OCI-LY7 (cell line): ENCODE measurements at regions of chr16 and their contacts with region 1.

Region 1: DNA sequence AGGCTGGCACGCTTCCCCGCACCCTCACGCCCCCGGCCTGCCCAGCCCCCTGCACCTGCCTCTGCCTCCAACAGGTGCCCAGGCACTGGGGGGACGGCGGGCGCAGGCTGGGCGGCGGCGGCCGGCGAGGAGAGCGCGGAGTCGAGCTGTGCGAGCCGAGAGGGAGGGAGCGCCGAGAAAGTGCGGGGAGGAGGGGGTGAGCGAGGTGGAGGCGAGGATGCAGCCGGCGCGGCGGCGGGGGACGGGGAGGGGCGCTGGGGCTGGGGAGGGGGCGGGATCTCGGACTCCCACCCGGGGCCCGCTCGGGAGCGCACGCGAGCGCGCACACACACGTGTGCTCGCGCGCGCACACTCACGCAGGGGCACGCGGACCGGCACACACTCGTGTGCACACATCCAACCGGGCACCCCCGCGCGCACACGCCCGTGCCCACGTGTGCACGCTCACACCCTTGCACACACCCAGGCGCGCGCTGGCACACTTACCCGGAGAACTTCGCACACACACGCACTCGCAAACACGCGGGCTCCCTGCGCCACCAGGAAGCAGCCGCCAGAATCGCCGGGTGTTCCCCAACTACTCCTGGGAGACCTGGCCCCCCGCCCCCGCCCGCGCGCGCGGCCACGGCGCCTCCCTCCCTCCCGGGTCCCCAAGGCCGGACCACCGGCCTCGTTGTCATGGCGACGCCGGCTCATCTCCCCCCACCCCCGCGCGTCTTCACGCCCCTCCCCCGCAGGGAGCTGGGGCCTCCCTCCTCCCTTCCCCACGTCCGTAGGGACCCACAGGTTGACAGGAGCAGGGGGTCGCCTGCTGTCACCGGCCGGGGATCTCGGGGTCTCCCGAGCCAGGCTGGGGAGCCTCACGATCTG is at the start of gene DOC2A:
- DNase-seq: no peak
- H3K4me3 ChIP-seq: peak within 1 kb of the TSS; percentile 36
- H3K27ac ChIP-seq: no peak within 1 kb of the TSS
- H3K4me1 ChIP-seq: peaks cover 2% of the 10 kb centered on the region
- CTCF ChIP-seq: no peak
- total RNA-seq, gene DOC2A: not detected in 2 replicates

Region 2: DNA sequence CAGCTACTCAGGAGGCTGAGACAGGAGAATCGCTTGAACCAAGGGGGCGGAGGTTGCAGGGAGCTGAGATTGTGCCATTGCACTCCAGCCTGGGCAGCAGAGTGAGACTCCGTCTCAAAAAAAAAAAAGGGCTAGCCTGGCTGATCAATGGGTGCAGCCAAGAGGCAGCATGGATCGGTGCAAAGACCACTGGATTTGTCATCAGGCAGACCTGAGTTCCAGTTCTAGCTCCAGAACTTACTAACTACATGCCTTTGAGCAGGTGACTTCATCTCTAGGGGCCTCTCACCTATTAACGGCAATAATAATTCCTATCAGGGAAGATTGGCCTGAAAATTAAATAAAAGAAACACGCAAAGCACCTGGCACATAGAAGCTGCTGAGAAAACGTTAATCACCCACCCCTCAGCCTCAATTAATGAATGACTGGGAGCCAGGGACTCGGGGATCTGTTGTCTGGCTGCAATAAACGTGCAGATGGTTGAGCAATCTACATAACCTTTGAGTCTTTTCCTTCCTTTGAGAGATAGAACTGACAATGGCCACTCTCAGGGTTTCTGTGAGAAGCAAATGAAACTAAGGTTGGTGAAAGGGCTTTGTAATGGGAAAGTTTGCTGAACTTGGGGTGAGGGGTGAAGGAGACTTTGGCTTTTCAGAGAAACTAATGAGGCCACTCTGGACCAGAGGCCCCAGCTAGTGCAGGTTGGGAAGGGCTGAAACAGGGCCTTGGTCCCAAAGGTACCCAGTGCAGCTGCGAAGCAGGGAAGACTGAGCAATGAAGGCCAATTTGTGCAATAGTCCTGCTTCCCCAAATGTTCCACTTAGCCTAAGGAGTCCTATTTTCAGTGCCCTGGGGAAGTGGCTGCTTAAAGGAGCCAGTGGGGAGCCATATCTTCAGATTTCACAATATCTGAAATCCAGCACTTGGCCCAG is 119.3 kb before region 1 on chr16:
- CTCF ChIA-PET with region 1: no interaction called
- POLR2A ChIA-PET with region 1: no interaction called
- intact Hi-C with region 1: no loop called
- DNase-seq: no peak
- H3K4me3 ChIP-seq: no peak overlapping the region
- H3K27ac ChIP-seq: no peak overlapping the region
- H3K4me1 ChIP-seq: no peaks in the 10 kb centered on the region
- CTCF ChIP-seq: no peak

Region 3: GRCh38 chr16:29926005-29926710 is 84.9 kb before region 1 on chr16 and contains the start of gene KCTD13:
- CTCF ChIA-PET with region 1: no interaction called
- POLR2A ChIA-PET with region 1: no interaction called
- intact Hi-C with region 1: no loop called
- DNase-seq: peak; percentile 87
- H3K4me3 ChIP-seq: peak within 1 kb of the TSS; percentile 91
- H3K27ac ChIP-seq: peak within 1 kb of the TSS; percentile 32
- H3K4me1 ChIP-seq: peaks cover 25% of the 10 kb centered on the region
- CTCF ChIP-seq: no peak
- total RNA-seq, gene KCTD13: 14.4 and 15.9 TPM in 2 replicates

Region 4: DNA sequence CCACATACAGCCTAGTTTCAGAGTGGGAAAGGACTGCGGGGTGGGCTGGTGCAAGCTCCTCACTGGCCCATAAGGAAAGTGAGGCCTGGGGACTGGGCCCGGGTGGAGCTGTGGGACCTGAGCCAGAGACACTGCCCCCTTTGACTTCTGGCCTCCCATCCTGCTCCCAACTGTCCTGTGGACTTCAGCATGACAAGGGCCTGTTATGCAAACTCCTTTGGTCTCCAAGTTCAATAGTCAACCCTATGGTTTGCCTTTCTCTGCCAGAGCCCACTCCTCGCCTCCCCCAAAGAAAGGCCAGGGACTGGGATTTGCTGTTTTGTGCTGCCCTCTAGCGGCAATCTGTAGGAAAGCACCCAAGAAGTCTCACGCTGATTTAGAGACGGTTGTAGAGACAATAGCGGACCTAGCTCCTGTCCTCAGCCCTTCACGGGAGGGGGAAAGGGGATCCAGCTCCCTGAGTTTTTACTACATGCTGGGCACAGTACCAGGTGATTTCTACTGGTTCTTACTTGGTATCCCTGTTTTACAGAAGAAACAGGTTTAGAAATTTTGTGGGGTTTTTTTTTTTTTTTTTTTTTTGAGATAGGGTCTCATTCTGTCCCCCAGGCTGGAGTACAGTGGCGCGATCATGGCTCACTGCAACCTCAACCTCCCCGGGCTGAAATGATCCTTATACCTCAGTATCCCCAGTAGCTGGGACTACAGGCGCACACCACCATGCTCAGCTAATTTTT is 21.2 kb after region 1 on chr16:
- CTCF ChIA-PET with region 1: interaction called, 15 read pairs
- POLR2A ChIA-PET with region 1: no interaction called
- intact Hi-C with region 1: no loop called
- DNase-seq: peak; percentile 80
- H3K4me3 ChIP-seq: no peak overlapping the region
- H3K27ac ChIP-seq: no peak overlapping the region
- H3K4me1 ChIP-seq: no peaks in the 10 kb centered on the region
- CTCF ChIP-seq: peak; percentile 97

Region 5: DNA sequence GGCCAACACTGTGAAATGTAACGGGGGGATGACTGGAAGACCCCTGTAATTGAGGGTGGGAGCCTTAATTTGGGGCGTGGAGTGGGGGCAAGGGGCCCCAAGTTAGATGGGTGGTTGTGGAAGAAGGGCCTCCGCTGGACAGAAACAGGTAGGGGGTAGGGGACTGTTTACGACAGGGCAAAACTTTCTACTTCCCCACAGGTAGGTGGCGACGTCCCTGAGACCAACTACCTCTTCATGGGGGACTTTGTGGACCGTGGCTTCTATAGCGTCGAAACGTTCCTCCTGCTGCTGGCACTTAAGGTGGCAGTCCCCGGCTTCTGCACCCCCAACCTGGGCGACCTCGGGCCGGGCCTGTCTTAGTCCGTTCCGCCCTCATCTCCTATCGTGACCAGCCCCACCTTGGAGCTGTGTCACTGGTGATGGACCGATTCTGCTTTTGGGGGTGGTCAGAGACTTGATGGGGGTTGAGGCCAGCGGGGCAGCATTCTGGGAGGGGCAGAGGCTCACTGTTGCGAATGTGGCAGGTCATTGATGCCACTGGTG is 71.5 kb after region 1 on chr16:
- CTCF ChIA-PET with region 1: no interaction called
- POLR2A ChIA-PET with region 1: no interaction called
- intact Hi-C with region 1: no loop called
- DNase-seq: no peak
- H3K4me3 ChIP-seq: no peak overlapping the region
- H3K27ac ChIP-seq: no peak overlapping the region
- H3K4me1 ChIP-seq: peaks cover 4% of the 10 kb centered on the region
- CTCF ChIP-seq: peak; percentile 55